Mammary epithelial cell (primary cell): ENCODE measurements at regions of chr20 and their contacts with region 1.

Region 1: DNA sequence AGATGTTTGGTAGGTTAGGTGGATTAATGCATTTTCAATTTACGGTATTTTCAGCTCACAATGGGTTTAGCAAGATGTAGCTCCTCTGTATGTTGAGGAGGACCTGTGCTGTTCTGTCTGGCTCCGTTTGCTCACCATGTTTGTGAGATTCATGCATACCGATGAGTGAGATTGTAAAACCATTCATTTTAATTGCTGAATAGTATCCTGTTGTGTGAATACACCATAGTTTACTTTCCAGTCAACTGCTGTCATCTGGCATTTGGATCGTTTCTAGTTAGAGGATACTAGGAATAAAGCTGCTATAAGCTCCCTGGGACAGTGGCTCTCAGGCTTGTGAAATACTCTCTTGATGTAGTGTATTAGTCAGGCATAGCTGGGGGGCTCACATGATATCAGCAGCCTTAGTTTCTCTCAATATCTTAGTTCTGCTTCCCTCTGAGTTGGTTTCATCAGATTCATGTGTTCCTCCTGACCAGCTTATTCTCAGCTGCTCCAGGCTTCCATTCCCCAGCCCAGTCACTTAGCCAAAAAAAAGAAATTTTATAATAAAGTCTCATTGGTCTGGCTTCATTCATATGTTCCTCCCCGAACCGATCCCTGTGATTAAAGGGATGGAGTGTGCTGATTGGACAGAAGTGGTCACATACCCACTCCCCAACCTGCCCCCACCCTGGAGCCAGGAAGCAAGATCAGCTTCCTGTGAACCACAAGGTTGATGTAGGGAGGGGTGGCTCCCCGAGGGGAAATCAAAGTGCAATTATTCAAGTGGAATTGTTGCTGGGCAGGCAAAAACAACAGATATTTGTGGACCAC is 10.9 kb upstream of the B4GALT5 start:
- DNase-seq: peak; percentile 14
- H3K4me3 ChIP-seq: no peak overlapping the region
- H3K27ac ChIP-seq: no peak overlapping the region
- H3K4me1 ChIP-seq: no peaks in the 10 kb centered on the region
- H3K27me3 ChIP-seq: no peaks in the 10 kb centered on the region
- CTCF ChIP-seq: no peak

Region 2: GRCh38 chr20:49631061-49631788 is 93.4 kb before region 1 on chr20:
- CTCF ChIA-PET with region 1: interaction called, 13 read pairs
- dilution Hi-C with region 1: no loop called
- in situ Hi-C with region 1: no loop called
- intact Hi-C with region 1: no loop called
- DNase-seq: no peak
- H3K4me3 ChIP-seq: no peak overlapping the region
- H3K27ac ChIP-seq: no peak overlapping the region
- H3K4me1 ChIP-seq: no peaks in the 10 kb centered on the region
- H3K27me3 ChIP-seq: no peaks in the 10 kb centered on the region
- CTCF ChIP-seq: no peak

Region 3: GRCh38 chr20:49676581-49677291 is 47.9 kb before region 1 on chr20:
- CTCF ChIA-PET with region 1: no interaction called
- dilution Hi-C with region 1: no loop called
- in situ Hi-C with region 1: no loop called
- intact Hi-C with region 1: no loop called
- DNase-seq: peak; percentile 61
- H3K4me3 ChIP-seq: no peak overlapping the region
- H3K27ac ChIP-seq: peak overlapping the region; percentile 13
- H3K4me1 ChIP-seq: peaks cover 46% of the 10 kb centered on the region
- H3K27me3 ChIP-seq: no peaks in the 10 kb centered on the region
- CTCF ChIP-seq: no peak

Region 4: DNA sequence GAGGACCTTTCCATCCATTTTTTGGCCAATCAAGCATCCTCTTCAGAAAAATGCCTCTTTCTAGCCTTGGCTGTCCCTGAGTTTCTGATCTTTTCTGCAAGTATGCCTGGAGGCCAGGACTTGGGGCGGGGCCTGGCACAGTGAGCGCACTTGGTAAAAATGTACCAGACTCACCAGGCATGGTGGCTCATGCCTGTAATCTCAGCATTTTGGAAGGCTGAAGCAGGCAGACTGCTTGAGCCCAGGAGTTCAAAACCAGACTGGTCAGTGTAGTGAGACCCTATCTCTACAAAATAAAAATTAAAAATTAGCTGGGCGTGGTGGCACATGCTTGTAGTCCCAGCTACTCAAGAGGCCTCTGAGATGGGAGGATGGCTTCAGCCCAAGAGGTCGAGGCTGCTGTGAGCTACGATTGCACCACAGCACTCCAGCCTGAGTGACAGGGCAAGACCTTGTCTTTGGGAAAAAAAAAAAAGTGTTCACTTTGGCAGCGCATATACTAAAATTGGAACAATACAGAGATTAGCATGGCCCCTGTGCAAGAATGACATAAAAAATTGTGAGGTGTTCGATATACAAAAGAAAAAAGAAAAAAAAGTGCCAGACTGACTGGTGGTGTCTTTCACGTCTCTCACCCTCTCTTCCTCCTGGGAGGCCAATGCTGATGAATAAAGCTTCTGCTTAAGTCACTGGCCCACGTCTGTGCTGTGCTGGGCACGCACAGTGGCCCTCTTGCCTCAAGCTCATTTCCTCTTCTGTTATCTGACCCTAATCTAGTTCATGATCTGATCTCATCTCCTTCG is 69.9 kb after region 1 on chr20:
- CTCF ChIA-PET with region 1: no interaction called
- dilution Hi-C with region 1: loop called (anchors 5 kb)
- in situ Hi-C with region 1: no loop called
- intact Hi-C with region 1: no loop called
- DNase-seq: no peak
- H3K4me3 ChIP-seq: no peak overlapping the region
- H3K27ac ChIP-seq: no peak overlapping the region
- H3K4me1 ChIP-seq: no peaks in the 10 kb centered on the region
- H3K27me3 ChIP-seq: no peaks in the 10 kb centered on the region
- CTCF ChIP-seq: no peak